Common myeloid progenitor, CD34-positive (primary cell): ENCODE measurements at regions of chr13 and their contacts with region 1.

Region 1: DNA sequence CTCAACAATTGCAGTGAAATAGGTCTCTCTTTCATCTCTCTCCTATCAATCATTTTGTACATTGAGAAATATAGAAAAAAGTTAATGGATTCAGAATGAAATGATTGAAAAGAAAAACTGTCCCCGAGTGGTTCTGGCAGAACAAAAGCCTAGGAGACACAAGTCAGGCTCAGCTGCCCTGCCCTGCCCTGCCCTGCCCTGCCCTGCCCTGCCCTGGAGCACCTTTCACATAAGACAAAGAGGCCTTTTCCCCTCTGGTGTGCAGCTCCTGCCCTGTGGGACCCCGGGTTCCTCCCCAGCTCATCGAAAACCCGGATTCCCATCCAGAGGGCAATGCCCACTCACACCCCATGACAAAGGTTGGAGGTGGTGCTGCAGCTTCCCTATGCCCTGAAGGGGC is 94.7 kb downstream of the TEX26 start:
- DNase-seq: no peak
- H3K4me3 ChIP-seq: no peak overlapping the region
- H3K27ac ChIP-seq: no peak overlapping the region
- H3K4me1 ChIP-seq: no peaks in the 10 kb centered on the region
- H3K27me3 ChIP-seq: peaks cover 3 to 83% (median 38%) of the 10 kb centered on the region in 5 experiments

Region 2: DNA sequence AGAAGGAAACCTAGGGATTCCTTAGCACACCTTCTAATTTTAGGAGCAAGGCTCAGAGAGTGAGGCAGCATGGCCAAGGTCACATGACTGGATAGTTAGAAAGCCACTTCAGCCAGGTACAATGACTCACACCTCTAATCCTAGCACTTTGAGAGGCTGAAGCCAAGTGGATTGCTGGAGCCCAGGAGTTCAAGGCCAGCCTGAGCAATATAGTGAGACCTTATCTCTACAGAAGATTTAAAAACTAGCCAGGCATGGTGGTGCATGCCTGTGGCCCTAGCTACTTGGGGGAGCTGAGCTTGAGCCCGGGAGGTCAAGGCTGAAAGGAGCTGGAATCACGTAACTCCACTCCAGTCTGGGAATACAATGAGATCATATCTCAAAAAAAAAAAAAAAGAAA is 25.5 kb before region 1 on chr13:
- CTCF ChIA-PET with region 1: no interaction called
- POLR2A ChIA-PET with region 1: no interaction called
- DNase-seq: no peak
- H3K4me3 ChIP-seq: no peak overlapping the region
- H3K27ac ChIP-seq: no peak overlapping the region
- H3K4me1 ChIP-seq: no peaks in the 10 kb centered on the region
- H3K27me3 ChIP-seq: peaks cover 0 to 50% (median 17%) of the 10 kb centered on the region in 5 experiments

Region 3: GRCh38 chr13:31044377-31045285 is 17.5 kb after region 1 on chr13:
- CTCF ChIA-PET with region 1: interaction called, 13 read pairs
- POLR2A ChIA-PET with region 1: no interaction called
- DNase-seq: peak; percentile 77 to 91 (median 89)
- H3K4me3 ChIP-seq: no peak overlapping the region
- H3K27ac ChIP-seq: no peak overlapping the region
- H3K4me1 ChIP-seq: peaks cover 3 to 22% (median 18%) of the 10 kb centered on the region in 4 experiments
- H3K27me3 ChIP-seq: peaks cover 7 to 77% (median 23%) of the 10 kb centered on the region in 5 experiments